ENCODE measurements at regions of chr6 and their contacts with region 1.

Region 1: GRCh38 chr6:27893059-27893835 is 18.9 kb downstream of the OR2B2 start:
- DNase-seq: peak in 9 of 10 donors; percentile 23 to 75 (median 63)
- H3K4me3 ChIP-seq: peak overlapping the region; percentile 54 to 96 (median 77)
- H3K27ac ChIP-seq: peak overlapping the region in 31 of 59 donors; percentile 0 to 73 (median 37)
- H3K27me3 ChIP-seq: peaks cover 0 to 57% (median 49%) of the 10 kb centered on the region in 45 donors
- CTCF ChIP-seq: no peak

Region 2: DNA sequence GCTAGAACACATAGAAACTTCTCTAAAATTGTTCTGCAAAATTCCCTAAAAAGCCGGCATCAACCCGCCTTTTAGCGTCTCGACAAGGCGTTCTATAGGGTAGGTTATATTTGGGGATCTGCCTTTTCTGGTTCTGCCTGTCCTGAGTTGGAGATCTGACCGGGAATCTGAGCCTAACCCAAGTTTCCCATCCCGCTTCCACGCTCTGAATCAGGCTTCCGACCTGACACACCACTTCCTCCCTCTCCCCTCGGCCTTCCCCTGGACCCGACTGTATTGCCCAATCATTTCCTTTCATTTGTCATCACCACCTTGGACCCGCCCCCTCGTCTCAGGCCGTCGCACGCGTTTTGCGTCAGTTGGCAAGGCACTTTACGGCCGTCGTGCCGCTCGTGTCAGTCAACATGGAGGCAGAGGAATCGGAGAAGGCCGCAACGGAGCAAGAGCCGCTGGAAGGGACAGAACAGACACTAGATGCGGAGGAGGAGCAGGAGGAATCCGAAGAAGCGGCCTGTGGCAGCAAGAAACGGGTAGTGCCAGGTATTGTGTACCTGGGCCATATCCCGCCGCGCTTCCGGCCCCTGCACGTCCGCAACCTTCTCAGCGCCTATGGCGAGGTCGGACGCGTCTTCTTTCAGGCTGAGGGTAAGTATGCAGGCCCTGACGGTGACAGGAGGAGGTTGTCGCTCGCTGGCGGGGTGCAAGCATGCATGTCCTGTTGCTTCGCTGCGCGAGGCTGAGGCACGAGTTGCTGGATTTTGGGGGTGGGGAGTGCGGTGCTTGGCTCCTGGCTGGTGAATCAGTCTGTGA is 1296.5 kb before region 1 on chr6 and contains the start of gene ABT1:
- intact Hi-C with region 1: loop called in 1 of 2 experiments (anchors 10 kb)
- DNase-seq: peak; percentile 94 to 99 (median 98)
- H3K4me3 ChIP-seq: peak within 1 kb of the TSS; percentile 68 to 100 (median 95)
- H3K27ac ChIP-seq: peak within 1 kb of the TSS; percentile 58 to 97 (median 89)
- H3K27me3 ChIP-seq: peaks cover 0 to 26% (median 2%) of the 10 kb centered on the region in 45 donors
- CTCF ChIP-seq: peak in 21 of 56 donors; percentile 9 to 53 (median 30)
- total RNA-seq, gene ABT1: 5.9 to 11.3 (median 8.3) TPM

Region 3: GRCh38 chr6:27518881-27519795 is 374.1 kb before region 1 on chr6:
- intact Hi-C with region 1: loop called (anchors 5 to 10 kb)
- DNase-seq: peak in 8 of 10 donors; percentile 43 to 69 (median 58)
- H3K4me3 ChIP-seq: peak overlapping the region; percentile 61 to 97 (median 83)
- H3K27ac ChIP-seq: peak overlapping the region; percentile 52 to 97 (median 90)
- H3K27me3 ChIP-seq: peaks cover 0 to 23% (median 9%) of the 10 kb centered on the region in 45 donors
- CTCF ChIP-seq: peak; percentile 51 to 78 (median 70)

Region 4: DNA sequence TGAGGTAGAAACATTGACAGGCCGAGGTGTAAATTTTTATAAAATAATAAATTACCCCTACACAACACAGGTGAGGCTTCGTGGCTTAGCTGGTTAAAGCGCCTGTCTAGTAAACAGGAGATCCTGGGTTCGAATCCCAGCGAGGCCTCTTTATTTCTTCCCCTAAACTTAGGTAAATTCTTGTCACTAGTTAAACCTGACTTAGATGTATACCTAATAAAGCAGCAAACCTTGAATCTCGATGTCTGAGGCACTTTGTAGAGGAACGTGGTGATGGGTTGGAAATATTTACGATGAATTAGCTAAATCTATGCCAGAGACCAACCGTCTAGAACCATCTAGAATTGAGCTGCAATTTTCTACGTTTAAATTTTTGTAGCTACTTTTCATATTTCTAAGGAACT is 166.6 kb before region 1 on chr6:
- intact Hi-C with region 1: no loop called
- DNase-seq: no peak
- H3K4me3 ChIP-seq: no peak overlapping the region
- H3K27ac ChIP-seq: no peak overlapping the region
- H3K27me3 ChIP-seq: peaks cover 0 to 54% (median 5%) of the 10 kb centered on the region in 45 donors
- CTCF ChIP-seq: no peak

Region 5: GRCh38 chr6:27772261-27773001 is 120.8 kb before region 1 on chr6:
- intact Hi-C with region 1: loop called in 1 of 2 experiments (anchors 5 kb)
- DNase-seq: peak; percentile 60 to 85 (median 74)
- H3K4me3 ChIP-seq: peak overlapping the region in 17 of 59 donors; percentile 11 to 40 (median 28)
- H3K27ac ChIP-seq: no peak overlapping the region
- H3K27me3 ChIP-seq: peaks cover 0 to 75% (median 26%) of the 10 kb centered on the region in 45 donors
- CTCF ChIP-seq: peak; percentile 63 to 94 (median 86)

Region 6: DNA sequence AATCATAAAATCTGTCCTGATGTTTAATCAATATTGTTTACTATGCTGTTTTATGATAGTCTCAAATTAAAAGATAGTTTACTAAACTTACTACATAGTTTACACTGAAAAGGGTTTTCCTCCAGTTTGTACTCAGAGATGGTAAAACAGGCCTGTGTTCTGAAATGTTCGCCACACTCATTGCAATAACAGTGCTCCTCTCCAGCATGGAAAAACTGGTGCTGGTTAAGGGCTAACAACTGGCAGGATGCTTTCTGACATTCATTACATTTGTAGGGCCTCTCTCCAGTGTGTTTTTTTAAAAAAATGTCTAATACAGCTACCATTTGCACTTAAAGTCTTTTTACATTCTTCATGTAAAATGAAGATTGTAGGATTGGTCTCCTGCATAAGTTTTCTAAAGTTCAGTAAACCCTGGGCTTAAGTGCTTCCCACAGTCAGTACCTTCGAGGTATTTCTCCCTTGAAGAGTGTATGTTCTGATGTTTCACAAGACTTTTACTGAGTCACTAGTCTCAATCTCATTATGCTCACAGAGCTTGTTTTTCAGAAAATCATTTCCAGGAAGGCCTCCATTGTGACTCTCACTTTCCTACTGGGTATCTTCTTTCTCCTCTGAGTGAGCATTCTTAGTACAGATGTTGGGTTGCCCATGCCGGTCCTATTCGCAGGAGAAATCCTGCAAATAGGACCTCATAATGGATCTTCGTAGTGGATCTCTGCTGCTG is 515.0 kb after region 1 on chr6:
- intact Hi-C with region 1: no loop called
- DNase-seq: no peak
- H3K4me3 ChIP-seq: no peak overlapping the region
- H3K27ac ChIP-seq: no peak overlapping the region
- H3K27me3 ChIP-seq: peaks cover 0 to 16% (median 0%) of the 10 kb centered on the region in 45 donors
- CTCF ChIP-seq: no peak

Measured in dorsolateral prefrontal cortex (tissue), 120 donors.